Calu3 (cell line): ENCODE measurements at regions of chr16 and their contacts with region 1.

Region 1: DNA sequence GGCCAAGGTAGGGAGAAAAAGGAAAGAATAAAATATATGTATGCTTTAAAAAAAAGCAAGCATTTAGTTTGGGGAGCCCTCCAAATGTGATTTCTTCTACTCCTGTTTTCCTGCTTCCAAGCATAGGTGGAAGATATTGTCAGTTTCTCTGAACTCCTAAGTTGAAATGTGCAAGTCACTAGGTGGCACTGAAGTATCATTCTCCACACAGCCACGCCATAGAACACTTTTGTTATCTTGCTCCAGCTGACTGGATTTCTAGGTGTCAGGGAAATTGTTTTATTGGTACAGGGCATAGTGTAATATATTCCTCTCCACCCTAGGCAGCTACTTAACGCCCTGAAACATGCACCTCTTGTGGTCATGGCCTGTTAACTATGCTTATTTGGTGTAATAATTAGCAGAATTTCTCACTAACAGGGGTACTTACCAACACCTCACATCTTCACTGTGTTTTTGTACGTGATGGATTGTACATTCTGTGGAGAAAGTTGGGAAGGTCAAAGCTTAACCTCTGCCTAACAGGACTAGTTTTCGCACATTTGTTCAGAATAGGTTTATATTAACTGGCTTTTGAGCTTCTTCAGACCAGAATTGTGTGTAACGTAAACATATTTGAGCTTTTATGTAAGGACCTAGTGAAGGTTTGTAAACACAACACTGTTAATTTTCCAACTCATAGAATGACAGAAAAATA is 69.3 kb downstream of the FTO start:
- DNase-seq: peak; percentile 59
- H3K4me3 Mint-ChIP-seq: no peak overlapping the region
- H3K27ac Mint-ChIP-seq: no peak overlapping the region
- H3K4me1 Mint-ChIP-seq: peaks cover 36% of the 10 kb centered on the region
- H3K27me3 Mint-ChIP-seq: no peaks in the 10 kb centered on the region
- CTCF ChIP-seq: peak; percentile 68

Region 2: DNA sequence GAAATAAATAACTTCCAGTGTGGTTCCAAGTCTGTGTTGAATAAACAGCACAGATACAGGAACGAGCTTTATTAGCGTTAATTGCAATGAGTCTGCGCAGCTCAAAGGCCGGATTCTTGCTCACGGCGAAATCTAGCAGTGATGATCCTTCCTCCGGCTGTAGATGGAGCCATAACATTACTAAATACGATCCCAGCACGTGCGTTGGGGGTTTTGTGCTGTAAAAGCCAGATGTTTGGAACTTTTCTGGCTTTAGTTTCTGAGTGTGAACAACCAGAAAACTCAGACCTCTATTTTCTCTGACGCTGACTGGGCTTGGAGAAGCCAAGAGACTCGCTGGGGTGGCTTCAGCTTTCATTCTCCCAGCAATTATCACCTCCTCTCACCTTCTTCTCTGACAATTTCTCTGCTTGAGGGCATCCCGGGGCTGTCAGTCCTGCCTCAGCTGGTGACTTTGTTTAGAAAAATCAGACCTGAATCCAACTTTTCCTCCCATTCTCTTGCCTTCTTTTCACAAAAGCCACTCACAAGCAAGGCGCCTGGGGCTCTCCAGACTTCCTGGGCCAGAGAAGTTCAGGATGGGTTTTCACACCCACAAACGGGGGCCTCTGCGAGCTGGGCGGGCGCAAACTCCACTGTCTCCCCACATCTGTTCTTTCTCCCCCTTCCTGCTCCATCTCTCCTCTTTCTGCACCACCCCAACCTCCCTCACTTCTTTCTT is 223.2 kb before region 1 on chr16:
- CTCF ChIA-PET with region 1: interaction called, 7 read pairs
- intact Hi-C with region 1: loop called (anchors 5 kb)
- DNase-seq: peak; percentile 57
- H3K4me3 Mint-ChIP-seq: no peak overlapping the region
- H3K27ac Mint-ChIP-seq: no peak overlapping the region
- H3K4me1 Mint-ChIP-seq: peaks cover 7% of the 10 kb centered on the region
- H3K27me3 Mint-ChIP-seq: peaks cover 85% of the 10 kb centered on the region
- CTCF ChIP-seq: peak; percentile 63

Region 3: DNA sequence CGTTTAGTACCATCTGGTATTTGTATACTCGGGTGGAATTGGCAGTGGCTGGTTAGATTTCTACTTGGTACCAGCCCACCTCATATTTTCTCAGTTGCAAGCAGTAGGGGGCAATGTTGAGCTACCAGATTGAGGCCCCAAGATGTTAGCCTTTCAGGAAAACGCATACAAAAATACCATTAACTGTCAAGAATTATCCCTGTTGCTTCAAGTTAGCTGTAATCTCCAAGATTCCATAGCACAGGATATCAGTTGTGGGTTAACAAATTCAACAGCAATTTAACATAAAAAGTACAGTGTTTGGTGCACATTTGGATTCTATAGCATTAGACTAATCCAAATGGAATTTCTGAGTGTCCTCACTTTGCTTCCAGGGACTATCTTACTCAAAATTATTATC is 118.9 kb after region 1 on chr16:
- CTCF ChIA-PET with region 1: interaction called, 4 read pairs
- intact Hi-C with region 1: loop called (anchors 2 kb)
- DNase-seq: peak; percentile 67
- H3K4me3 Mint-ChIP-seq: no peak overlapping the region
- H3K27ac Mint-ChIP-seq: no peak overlapping the region
- H3K4me1 Mint-ChIP-seq: peaks cover 11% of the 10 kb centered on the region
- H3K27me3 Mint-ChIP-seq: no peaks in the 10 kb centered on the region
- CTCF ChIP-seq: peak; percentile 31

Region 4: DNA sequence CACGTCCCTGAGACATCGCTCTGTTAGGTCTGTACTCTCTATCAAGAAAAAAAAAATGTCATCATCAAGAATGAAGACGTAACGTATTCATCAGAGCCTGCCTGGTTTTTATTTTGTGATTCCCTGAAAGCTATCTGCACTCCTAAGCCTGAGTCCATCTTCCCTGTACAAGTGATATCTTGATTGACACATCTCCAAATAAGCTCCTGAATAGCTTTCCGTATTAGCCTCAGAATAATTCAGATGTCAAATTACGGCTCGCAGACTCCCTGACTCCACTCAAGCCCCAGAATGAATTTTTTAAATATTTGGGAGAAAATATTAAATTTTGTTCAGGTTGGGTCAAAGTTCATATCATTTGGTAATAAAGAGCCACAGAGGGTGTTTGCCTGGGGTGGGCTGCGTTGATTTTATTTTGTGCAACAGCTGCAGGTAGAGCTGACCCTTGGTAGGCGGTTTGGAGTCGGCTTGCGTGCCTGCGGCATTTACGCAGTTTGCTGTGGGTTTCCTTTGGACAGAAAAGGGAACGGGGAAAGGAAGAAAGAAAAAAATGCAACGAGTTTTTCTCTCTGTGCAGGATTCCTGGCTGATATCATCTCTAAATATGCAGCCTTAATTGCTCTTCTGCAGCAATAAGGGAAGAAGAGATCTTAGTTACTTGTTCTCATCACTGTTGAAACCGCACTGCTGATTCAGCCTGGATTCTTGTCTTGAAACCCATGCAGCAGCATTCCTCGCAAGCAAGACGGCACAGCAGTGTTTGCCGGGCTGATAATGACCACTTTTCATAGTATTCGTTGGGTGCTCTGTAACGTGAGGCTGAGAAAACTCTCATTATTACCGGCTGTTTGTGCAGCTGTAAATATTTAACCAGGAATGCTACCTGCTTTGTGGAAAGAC is 398.6 kb after region 1 on chr16:
- CTCF ChIA-PET with region 1: no interaction called
- intact Hi-C with region 1: loop called (anchors 5 kb)
- DNase-seq: peak; percentile 43
- H3K4me3 Mint-ChIP-seq: peak overlapping the region; percentile 13
- H3K27ac Mint-ChIP-seq: no peak overlapping the region
- H3K4me1 Mint-ChIP-seq: peaks cover 28% of the 10 kb centered on the region
- H3K27me3 Mint-ChIP-seq: peaks cover 41% of the 10 kb centered on the region
- CTCF ChIP-seq: no peak

Region 5: DNA sequence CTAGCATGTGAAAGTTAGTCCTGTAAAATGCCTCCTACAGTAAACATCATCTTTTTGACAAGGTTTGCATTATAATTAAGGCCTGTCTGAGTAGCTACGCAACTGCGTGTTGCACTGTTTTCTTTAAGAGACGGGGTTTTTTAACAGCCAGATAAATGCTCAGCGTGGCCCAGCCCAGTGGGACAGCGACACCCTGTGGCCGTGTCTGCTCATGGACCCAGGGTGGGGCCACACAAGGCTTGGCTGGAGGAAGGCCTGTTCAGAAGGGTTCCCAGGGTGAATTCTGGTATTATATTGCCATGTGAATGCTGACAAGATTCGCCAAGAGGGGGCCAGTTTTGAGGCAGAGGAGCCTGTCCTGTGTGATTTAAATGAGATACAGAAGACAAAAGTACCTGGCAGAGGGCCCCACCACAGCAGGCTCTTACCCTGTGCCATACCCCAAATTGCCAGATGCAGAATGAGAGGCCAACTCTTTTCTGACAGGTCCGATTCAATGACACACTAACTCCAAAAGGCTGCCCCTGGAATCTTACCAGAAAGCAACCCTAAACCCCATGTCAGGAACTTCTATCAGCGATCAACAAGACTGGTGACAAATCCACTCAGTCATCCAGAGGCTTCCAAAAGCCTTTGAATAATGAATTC is 1484.8 kb after region 1 on chr16:
- CTCF ChIA-PET with region 1: no interaction called
- intact Hi-C with region 1: loop called (anchors 5 kb)
- DNase-seq: peak; percentile 53
- H3K4me3 Mint-ChIP-seq: no peak overlapping the region
- H3K27ac Mint-ChIP-seq: no peak overlapping the region
- H3K4me1 Mint-ChIP-seq: no peaks in the 10 kb centered on the region
- H3K27me3 Mint-ChIP-seq: peaks cover 3% of the 10 kb centered on the region
- CTCF ChIP-seq: peak; percentile 49